BJ (cell line): ENCODE measurements at regions of chr12 and their contacts with region 1.

Region 1: DNA sequence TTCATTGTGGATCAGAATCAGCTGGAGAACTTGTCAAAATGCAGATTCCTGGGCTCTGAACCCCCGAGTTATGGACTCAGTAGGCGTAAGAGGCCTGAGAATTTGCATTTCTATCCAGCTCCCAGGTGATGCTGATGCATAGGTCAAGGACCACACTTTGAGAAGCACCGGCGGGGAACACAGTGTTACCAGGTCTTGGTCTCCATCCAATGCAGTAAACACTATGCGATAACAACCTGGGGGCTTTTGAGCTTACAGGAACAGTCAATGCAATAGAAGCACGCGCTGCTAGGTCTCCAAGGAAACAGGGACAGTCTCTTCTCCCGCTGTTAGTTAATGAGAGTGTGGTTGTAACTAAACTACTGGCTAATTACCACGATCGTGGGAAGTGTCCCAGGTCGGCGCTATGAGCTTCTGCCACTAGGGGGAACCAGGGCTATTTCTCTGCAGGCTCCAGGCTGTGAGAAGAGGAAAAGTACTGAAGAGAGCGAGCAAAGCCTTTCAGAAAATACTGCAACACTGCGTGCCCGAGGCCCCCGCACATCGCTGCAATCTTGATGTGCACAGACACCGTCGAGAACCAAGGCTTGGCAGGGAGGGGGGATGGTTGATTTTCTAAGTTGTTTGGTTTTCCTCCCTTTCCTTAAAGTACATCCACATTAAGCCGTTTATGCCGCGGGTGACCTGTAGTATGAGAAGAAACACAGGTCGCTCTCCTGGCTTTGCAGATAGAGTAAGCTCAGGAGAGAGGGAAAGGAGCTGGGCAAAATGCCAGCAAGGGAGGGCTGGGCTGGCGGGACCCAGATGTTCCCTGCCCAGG is 52.0 kb upstream of the KCNA1 start:
- DNase-seq: no peak
- H3K4me3 ChIP-seq: no peak overlapping the region
- H3K27me3 ChIP-seq: peaks cover 18% of the 10 kb centered on the region
- CTCF ChIP-seq: peak; percentile 96

Region 2: DNA sequence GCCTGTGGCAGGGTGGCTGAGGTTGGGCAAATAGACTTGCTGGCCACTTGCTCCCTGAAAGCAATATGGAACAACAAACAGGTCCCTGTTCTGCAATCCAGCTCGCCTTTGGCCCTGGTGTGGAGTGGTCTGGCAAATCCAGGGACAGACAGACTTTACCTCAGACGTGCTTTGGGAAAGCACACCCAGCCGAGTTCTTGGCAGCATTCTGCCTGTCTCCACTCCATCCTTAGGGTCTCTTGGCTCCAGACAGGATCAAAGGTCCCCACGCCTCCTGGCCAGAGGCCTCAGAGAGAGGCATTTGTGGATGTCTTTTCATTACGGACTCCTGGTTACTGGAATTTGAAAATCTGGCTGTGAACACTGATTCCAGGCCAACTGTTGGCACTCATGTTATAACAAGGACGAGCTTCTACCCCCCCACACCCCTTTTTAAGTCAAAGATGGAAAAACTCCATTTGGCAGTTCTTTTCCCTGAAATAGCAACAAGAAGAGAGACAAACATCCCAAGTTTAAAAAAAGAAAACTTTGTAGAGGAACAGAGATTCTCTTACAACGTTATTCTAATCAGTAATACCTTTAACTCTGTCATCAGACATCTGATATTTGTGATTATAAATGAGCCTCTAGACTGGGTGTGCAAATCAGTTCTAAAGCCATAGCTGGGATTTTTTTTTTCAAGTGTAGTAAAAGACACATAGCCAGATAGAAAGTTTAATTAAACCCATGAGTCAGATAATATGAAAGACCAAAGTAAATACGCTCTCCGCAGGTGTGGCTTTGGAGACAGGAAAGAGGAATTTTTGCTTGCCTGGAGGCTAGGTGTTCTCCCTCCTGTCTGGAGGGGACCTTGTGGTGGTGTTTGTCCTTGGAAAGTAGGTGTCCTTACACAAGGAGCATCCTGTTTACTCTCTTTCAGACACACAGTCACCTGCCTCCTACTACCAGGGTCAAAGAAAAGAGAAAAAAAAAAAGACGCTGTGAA is 76.7 kb before region 1 on chr12:
- CTCF ChIA-PET with region 1: no interaction called
- POLR2A ChIA-PET with region 1: no interaction called
- DNase-seq: no peak
- H3K4me3 ChIP-seq: no peak overlapping the region
- H3K27me3 ChIP-seq: no peaks in the 10 kb centered on the region; the same call in 1 of the 2 replicates
- CTCF ChIP-seq: no peak

Region 3: GRCh38 chr12:4833524-4833923 is 24.2 kb before region 1 on chr12:
- CTCF ChIA-PET with region 1: interaction called, 21 read pairs
- POLR2A ChIA-PET with region 1: no interaction called
- DNase-seq: no peak
- H3K4me3 ChIP-seq: no peak overlapping the region
- H3K27me3 ChIP-seq: no peaks in the 10 kb centered on the region
- CTCF ChIP-seq: no peak

Region 4: DNA sequence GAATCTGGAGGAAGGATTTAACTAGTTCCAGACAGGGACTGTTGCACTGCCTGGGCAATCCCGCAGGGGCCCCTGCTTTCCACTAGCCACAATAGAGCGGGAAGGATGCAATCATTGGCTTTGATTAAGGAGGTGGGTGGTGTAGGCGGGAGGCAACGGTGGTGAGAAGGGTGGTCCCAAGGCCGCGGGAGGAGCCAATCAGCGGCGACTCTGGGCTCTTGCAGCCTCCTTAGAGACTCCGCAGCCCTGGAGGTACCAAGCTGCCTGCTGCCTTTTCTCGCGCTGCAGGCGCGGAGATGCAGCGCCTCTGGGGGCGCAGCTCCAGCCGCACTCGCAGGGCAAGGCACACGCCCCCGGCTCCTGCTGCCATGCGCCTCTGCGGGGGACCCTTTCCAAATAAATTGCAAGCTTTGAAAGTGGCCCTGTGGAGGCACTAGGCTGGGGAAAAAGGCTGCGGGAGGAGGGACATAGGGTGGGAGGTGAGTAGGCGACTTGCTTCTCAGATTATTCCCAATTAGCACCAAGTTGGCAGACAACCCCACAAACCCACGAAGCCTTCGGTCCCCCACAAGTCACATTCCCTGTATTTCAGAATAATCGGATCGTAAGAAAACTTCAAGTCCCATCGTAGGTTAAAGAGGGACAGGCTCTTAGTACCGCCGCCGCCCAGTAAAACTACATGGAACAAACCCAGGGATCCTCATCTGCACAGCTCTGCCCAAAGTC is 51.2 kb after region 1 on chr12:
- CTCF ChIA-PET with region 1: interaction called, 12 read pairs
- POLR2A ChIA-PET with region 1: no interaction called
- DNase-seq: no peak
- H3K4me3 ChIP-seq: no peak overlapping the region
- H3K27me3 ChIP-seq: peaks cover 39% of the 10 kb centered on the region
- CTCF ChIP-seq: no peak

Region 5: GRCh38 chr12:4987076-4987760 is 129.5 kb after region 1 on chr12:
- CTCF ChIA-PET with region 1: interaction called, 241 read pairs
- POLR2A ChIA-PET with region 1: no interaction called
- DNase-seq: no peak
- H3K4me3 ChIP-seq: no peak overlapping the region
- H3K27me3 ChIP-seq: peaks cover 7% of the 10 kb centered on the region
- CTCF ChIP-seq: no peak

Region 6: DNA sequence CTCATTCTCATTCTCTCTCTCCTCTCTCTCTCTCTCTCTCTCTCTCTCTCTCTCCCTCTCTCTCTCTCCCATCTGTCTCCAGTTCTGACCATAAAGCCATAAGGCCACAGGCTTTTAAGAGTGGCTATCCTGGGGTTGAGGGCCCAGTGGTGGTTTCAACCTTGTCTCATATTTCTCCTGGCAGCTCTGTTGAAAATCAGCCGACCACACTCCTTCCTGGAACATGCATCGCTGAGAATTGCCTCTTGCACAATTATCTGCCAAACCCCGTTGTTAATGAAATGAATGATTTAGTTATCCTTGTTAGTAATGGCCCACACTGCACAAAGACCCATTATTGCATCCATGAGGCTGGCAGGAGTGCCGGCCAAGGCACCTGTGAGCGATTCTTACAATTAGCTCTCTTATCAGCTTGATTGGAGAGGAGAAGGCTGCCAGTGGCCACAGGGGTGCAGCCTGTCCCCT is 155.6 kb after region 1 on chr12:
- CTCF ChIA-PET with region 1: interaction called, 94 read pairs
- POLR2A ChIA-PET with region 1: no interaction called
- DNase-seq: no peak
- H3K4me3 ChIP-seq: no peak overlapping the region
- H3K27me3 ChIP-seq: no peaks in the 10 kb centered on the region; the same call in 1 of the 2 replicates
- CTCF ChIP-seq: no peak